B cell (primary cell): ENCODE measurements at regions of chr10 and their contacts with region 1.

Region 1: GRCh38 chr10:101782811-101783735 is at the start of gene NPM3:
- DNase-seq: peak; percentile 78
- ATAC-seq: peak; percentile 66
- H3K4me3 ChIP-seq: peak within 1 kb of the TSS; percentile 18 to 73 (median 67)
- H3K4me3 Mint-ChIP-seq: peak within 1 kb of the TSS; percentile 99
- H3K27ac ChIP-seq: peak within 1 kb of the TSS; percentile 8 to 69
- H3K27ac Mint-ChIP-seq: peak within 1 kb of the TSS; percentile 90
- H3K4me1 ChIP-seq: peaks cover 32 to 57% of the 10 kb centered on the region in 2 donors
- H3K4me1 Mint-ChIP-seq: peaks cover 55% of the 10 kb centered on the region
- H3K27me3 ChIP-seq: peaks cover 0 to 16% (median 7%) of the 10 kb centered on the region in 4 experiments
- H3K27me3 Mint-ChIP-seq: peaks cover 6% of the 10 kb centered on the region
- CTCF ChIP-seq: no peak
- total RNA-seq, gene NPM3: 13.4 and 13.5 TPM in 2 replicates

Region 2: DNA sequence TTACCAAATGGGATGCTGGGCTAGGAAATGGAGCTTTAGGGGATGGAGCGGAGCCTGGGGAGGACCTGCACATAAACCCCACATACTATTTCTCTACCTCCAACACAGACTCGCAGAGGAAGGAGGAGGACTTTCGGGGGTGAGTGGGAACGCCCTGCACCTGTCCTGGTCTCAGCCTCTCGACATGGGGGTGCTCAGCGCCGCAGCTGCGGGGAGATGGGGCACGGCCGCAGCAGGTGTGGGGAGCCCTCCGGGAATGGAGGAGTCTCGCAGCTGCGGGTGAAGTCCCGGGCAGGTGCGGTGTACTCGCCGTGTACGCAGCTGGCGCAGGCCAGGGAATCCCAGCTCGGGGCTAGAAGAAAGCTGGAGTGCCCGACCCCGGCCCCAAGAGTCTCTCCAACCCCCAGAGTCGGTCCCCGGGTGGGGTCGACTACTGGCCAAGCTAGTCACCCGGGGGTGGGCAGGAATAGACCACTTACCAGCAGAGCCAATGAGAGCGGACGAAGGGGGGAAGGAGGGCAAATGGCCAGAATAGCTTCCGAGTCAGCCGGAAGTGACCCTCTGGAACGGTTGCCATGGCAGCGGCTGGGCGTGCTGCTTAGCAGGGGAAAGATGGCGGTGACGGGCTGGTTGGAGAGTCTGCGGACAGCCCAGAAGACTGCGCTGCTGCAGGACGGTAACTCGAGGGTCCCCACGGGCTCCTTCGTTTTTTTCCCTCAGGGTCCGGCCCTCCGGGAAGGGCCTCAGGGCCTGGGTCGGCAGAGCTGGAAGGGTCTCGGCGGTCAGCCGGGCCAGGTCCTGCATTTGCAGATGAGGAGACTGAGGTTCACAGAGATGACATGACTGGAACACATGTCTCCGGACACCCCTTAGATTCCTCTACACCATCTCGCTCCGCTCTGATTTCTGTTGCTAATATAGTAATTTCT is 195.1 kb before region 1 on chr10 and contains the starts of genes DPCD and POLL:
- CTCF ChIA-PET with region 1: interaction called, 4 read pairs
- POLR2A ChIA-PET with region 1: no interaction called
- intact Hi-C with region 1: loop called (anchors 5 kb)
- DNase-seq: peak; percentile 92
- ATAC-seq: peak; percentile 96
- H3K4me3 ChIP-seq: peak within 1 kb of the TSS; percentile 57 to 95 (median 91)
- H3K4me3 Mint-ChIP-seq: peak within 1 kb of the TSS; percentile 96
- H3K27ac ChIP-seq: peak within 1 kb of the TSS; percentile 70 to 86
- H3K27ac Mint-ChIP-seq: peak within 1 kb of the TSS; percentile 85
- H3K4me1 ChIP-seq: peaks cover 15 to 19% of the 10 kb centered on the region in 2 donors
- H3K4me1 Mint-ChIP-seq: peaks cover 21% of the 10 kb centered on the region
- H3K27me3 ChIP-seq: no peaks in the 10 kb centered on the region
- H3K27me3 Mint-ChIP-seq: no peaks in the 10 kb centered on the region
- CTCF ChIP-seq: no peak
- total RNA-seq, gene DPCD: 1.6 and 2.2 TPM in 2 replicates
- total RNA-seq, gene POLL: 46.7 TPM in 2 replicates

Region 3: GRCh38 chr10:101693978-101694673 is 88.9 kb before region 1 on chr10:
- CTCF ChIA-PET with region 1: interaction called, 6 read pairs
- POLR2A ChIA-PET with region 1: interaction called, 5 read pairs
- intact Hi-C with region 1: loop called (anchors 2 kb)
- DNase-seq: peak; percentile 84
- ATAC-seq: peak; percentile 66
- H3K4me3 ChIP-seq: peak overlapping the region; percentile 11 to 99 (median 87)
- H3K4me3 Mint-ChIP-seq: peak overlapping the region; percentile 97
- H3K27ac ChIP-seq: peak overlapping the region; percentile 96
- H3K27ac Mint-ChIP-seq: peak overlapping the region; percentile 99
- H3K4me1 ChIP-seq: peaks cover 14 to 22% of the 10 kb centered on the region in 2 donors
- H3K4me1 Mint-ChIP-seq: peaks cover 45% of the 10 kb centered on the region
- H3K27me3 ChIP-seq: no peaks in the 10 kb centered on the region
- H3K27me3 Mint-ChIP-seq: no peaks in the 10 kb centered on the region
- CTCF ChIP-seq: no peak

Region 4: DNA sequence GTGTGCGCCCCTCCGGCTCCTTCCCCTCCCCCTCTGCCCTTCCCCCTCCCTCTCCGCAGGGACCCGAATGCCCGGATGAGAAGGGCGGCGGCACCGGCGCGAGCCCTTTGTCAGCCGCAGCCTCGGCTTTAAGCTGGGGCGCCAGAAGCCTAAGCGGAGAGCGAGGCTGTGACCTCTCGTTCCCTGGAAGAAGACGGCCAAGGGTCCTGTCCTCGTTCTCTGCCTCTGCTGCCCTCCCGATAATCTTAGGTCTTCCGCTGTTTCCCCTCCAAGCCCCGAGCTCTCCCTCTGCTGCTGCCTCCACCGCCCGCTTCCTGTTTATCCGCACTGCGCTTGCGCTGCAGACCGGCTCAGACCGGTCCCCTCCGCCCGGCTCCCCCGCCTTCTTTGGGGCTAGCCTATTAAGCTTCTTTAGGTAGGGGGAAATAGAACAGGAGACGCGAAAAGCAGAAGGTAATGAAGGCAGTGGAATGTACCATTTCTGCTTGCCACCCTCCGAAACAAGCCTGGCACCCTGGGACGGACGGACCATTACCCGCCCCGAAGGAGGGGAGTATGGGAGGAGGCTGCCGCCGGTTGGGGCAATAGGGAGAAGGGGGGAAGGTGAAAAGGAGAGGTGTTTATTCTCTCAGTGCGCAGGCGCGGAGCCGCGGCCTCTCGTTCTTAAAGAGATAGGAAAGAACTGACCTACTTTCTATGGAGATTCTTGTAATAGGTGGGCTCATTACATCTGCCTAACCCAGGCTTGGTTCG is 35.2 kb after region 1 on chr10 and contains the start of gene OGA:
- CTCF ChIA-PET with region 1: interaction called, 48 read pairs
- POLR2A ChIA-PET with region 1: interaction called, 9 read pairs
- intact Hi-C with region 1: loop called (anchors 1 kb)
- DNase-seq: peak; percentile 98
- ATAC-seq: peak; percentile 87
- H3K4me3 ChIP-seq: peak within 1 kb of the TSS; percentile 56 to 97 (median 92)
- H3K4me3 Mint-ChIP-seq: peak within 1 kb of the TSS; percentile 94
- H3K27ac ChIP-seq: peak within 1 kb of the TSS; percentile 81 to 85
- H3K27ac Mint-ChIP-seq: peak within 1 kb of the TSS; percentile 99
- H3K4me1 ChIP-seq: peaks cover 27% of the 10 kb centered on the region in 2 donors
- H3K4me1 Mint-ChIP-seq: peaks cover 35% of the 10 kb centered on the region
- H3K27me3 ChIP-seq: no peaks in the 10 kb centered on the region
- H3K27me3 Mint-ChIP-seq: no peaks in the 10 kb centered on the region
- CTCF ChIP-seq: no peak
- total RNA-seq, gene OGA: 418 and 442 TPM in 2 replicates

Region 5: GRCh38 chr10:102072673-102073527 is 289.8 kb after region 1 on chr10:
- CTCF ChIA-PET with region 1: interaction called, 6 read pairs
- POLR2A ChIA-PET with region 1: no interaction called
- intact Hi-C with region 1: loop called (anchors 1 kb)
- DNase-seq: peak; percentile 84
- ATAC-seq: peak; percentile 94
- H3K4me3 ChIP-seq: no peak overlapping the region
- H3K4me3 Mint-ChIP-seq: no peak overlapping the region
- H3K27ac ChIP-seq: no peak overlapping the region
- H3K27ac Mint-ChIP-seq: no peak overlapping the region
- H3K4me1 ChIP-seq: no peaks in the 10 kb centered on the region
- H3K4me1 Mint-ChIP-seq: no peaks in the 10 kb centered on the region
- H3K27me3 ChIP-seq: no peaks in the 10 kb centered on the region
- H3K27me3 Mint-ChIP-seq: no peaks in the 10 kb centered on the region
- CTCF ChIP-seq: peak; percentile 91